ENCODE measurements at regions of chr7 and their contacts with region 1.

Region 1: DNA sequence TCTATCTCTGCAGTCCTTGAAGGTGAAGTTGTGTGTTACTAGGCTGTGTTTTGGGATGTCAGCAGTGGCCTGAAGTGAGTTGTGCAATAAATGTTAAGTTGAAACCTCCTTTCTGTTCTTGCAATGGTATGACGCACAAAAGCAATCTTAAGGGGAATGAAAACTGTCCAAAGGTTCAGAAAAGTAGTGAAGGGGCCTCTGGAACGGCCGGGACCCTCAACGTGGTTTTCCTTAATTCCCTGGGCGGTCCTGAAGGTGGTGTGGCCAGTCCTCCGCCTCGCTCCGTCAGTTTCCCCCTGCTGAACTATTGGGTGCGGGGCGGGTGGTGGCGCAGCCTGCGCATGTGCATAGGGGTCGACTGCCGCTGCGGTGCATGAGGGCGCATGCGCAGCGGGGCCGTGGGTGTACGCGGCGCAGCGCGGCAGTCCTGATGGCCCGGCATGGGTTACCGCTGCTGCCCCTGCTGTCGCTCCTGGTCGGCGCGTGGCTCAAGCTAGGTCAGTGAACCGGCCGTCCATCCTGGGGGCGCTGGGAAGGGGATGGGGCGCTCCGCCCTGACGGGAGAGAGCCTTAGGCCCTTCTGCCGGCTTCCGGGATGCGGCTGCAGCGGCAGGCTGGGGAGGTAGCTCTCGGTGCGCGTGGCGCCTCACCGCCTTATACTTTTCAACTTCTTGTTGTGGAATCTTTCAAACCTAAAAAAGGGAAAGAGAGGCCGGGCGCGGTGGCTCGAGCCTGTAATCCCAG is at the start of gene SUMF2:
- DNase-seq: peak; percentile 91
- ATAC-seq: peak; percentile 95
- H3K4me3 Mint-ChIP-seq: peak within 1 kb of the TSS; percentile 89
- H3K27ac Mint-ChIP-seq: peak within 1 kb of the TSS; percentile 92
- H3K4me1 Mint-ChIP-seq: peaks cover 45% of the 10 kb centered on the region
- H3K27me3 Mint-ChIP-seq: no peaks in the 10 kb centered on the region
- total RNA-seq, gene SUMF2: 115 to 145 TPM

Region 2: GRCh38 chr7:55964261-55965099 is 99.6 kb before region 1 on chr7 and contains the start of gene NIPSNAP2:
- CTCF ChIA-PET with region 1: interaction called, 15 read pairs
- DNase-seq: peak; percentile 59
- ATAC-seq: peak; percentile 88
- H3K4me3 Mint-ChIP-seq: peak within 1 kb of the TSS; percentile 75
- H3K27ac Mint-ChIP-seq: peak within 1 kb of the TSS; percentile 80
- H3K4me1 Mint-ChIP-seq: peaks cover 31% of the 10 kb centered on the region
- H3K27me3 Mint-ChIP-seq: no peaks in the 10 kb centered on the region
- total RNA-seq, gene NIPSNAP2: 28.6 to 29.0 TPM

Region 3: DNA sequence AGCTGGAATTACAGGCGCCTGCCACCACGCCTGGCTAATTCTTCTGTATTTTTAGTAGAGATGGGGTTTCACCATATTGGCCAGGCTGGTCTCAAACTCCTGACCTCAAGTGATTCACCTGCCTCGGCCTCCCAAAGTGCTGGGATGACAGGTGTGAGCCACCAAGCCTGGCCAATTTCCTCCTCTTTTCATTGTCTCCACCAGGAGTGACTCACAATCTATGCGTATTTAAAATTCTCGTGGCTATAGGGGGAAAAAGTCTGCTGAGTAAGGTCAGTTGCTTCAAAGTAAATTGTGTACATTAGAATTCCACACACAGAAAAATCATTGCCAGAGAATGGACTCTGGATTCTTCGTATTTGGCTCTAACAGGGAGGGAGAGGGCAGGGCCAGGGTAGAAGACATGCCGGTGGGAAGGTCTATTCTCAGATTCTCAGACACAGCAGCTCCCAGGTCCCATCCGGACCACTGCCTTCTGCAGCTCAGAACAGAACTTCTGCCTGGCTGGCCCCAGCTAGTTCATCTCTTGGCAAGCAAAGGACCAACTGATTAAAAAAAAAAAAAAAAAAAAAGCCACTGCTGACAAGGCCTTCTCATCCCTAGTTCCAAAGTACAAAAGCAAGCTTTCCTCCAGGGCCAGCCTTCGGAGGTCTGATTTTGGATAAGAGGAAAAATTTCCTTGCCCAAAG is 35.0 kb before region 1 on chr7:
- CTCF ChIA-PET with region 1: no interaction called
- DNase-seq: no peak
- ATAC-seq: no peak
- H3K4me3 Mint-ChIP-seq: no peak overlapping the region
- H3K27ac Mint-ChIP-seq: no peak overlapping the region
- H3K4me1 Mint-ChIP-seq: peaks cover 9% of the 10 kb centered on the region
- H3K27me3 Mint-ChIP-seq: no peaks in the 10 kb centered on the region

Region 4: DNA sequence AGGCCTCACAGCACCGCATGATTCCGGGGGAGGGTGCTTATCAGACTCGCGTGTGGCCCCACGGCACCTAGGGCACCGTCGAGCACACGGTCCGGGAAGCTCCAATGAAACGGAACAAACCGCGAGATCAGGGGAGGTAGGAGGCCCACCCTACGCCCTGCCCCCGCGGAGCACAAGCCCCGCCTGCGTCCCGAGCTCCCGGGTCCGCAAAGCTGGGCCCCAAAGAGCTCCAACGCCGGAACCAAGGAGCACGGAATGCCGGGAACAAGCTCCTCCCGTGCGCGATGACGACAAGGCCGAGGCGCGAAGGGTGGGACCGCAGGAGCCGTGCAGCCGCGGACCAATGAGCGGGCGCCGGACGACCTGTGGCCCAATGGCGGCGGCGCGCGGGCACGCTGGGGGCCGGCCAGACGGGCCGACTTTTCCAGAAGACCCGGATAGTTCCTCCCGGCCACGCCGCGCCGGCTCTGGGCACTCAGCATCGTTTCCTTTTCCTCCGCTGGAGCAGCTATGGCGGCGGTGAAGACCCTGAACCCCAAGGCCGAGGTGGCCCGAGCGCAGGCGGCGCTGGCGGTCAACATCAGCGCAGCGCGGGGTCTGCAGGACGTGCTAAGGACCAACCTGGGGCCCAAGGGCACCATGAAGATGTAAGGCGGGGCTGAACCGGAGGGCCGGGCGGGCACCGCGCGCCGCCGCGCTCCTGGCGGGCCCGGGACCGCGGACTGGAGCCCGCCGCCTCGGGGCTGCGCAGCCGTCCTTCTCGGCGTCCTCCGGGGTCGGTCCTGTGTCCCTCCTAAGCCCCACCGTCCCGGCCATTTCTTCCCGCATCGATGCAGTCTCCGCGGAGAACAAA is 12.5 kb before region 1 on chr7 and contains the starts of genes CCT6A and PSPH:
- CTCF ChIA-PET with region 1: interaction called, 14 read pairs
- DNase-seq: peak; percentile 93
- ATAC-seq: peak; percentile 96
- H3K4me3 Mint-ChIP-seq: peak within 1 kb of the TSS; percentile 87
- H3K27ac Mint-ChIP-seq: peak within 1 kb of the TSS; percentile 87
- H3K4me1 Mint-ChIP-seq: peaks cover 50% of the 10 kb centered on the region
- H3K27me3 Mint-ChIP-seq: no peaks in the 10 kb centered on the region
- total RNA-seq, gene CCT6A: 120 to 181 TPM
- total RNA-seq, gene PSPH: 12.4 to 22.2 TPM

Region 5: DNA sequence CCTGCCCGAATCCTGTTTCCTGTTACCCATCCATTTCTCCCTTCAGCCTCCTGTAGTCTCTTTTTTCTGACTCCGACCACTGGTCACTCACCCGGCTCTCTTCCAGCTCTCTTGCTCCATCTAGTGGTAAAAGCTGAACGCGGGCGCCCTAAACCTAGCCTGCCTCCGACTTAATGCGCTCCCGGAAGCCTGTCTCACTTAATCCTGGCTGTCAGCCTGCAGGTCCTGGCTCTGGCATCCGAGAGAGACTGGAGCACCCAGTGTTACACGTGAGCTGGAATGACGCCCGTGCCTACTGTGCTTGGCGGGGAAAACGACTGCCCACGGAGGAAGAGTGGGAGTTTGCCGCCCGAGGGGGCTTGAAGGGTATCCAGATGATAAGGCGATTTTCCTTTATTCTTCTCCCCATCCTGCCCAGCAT is 10.3 kb after region 1 on chr7:
- CTCF ChIA-PET with region 1: interaction called, 20 read pairs
- DNase-seq: peak; percentile 75
- ATAC-seq: peak; percentile 83
- H3K4me3 Mint-ChIP-seq: no peak overlapping the region
- H3K27ac Mint-ChIP-seq: peak overlapping the region; percentile 33
- H3K4me1 Mint-ChIP-seq: peaks cover 3% of the 10 kb centered on the region
- H3K27me3 Mint-ChIP-seq: no peaks in the 10 kb centered on the region

Region 6: DNA sequence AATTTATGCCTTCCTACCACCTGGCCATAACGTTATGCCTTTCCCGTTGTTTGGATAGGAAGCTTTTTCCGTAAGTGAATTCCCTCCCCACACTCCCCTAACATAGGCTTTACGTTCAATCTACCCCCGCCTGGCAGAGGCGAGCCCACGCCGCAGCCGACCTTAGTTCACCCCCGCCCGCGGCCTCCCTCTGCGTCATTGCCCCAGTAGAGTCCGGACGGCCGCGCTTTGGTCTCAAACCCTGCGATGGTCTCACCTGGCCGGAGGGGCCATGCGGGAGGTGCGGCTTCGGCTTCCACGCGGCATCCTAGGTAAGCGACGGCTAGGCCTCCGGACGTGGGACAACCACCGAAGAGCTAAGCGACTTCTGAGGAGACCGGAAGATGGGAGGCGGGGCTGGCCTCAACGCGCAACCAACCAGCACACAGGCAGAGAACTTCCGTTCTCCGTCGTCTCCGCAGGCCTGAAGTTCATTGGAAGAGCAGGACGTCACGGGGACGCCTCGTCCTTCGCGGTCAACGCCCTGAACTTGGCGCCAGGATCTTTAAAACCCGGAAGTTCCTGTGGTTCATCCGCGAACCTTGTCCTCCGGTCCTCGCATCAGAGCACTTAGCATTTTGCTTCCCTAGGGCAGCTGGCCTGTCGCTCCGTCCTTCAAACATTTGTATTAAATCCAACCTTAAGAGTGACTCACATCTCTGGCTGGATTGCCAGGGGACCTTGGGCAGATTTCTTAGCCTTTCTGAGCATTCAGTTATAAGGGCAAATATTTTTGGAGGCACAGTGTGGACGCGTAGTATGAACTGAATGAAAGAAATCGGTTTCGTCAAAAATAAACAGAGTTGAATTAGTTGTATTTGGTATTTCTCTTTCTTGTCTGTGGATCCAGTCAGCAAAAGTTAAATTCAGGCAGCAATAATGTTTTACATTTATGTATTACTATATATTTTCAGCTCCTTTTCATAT is 42.3 kb after region 1 on chr7 and contains the start of gene CHCHD2:
- CTCF ChIA-PET with region 1: interaction called, 11 read pairs
- DNase-seq: peak; percentile 97
- ATAC-seq: peak; percentile 99
- H3K4me3 Mint-ChIP-seq: peak within 1 kb of the TSS; percentile 97
- H3K27ac Mint-ChIP-seq: peak within 1 kb of the TSS; percentile 99
- H3K4me1 Mint-ChIP-seq: peaks cover 33% of the 10 kb centered on the region
- H3K27me3 Mint-ChIP-seq: no peaks in the 10 kb centered on the region
- total RNA-seq, gene CHCHD2: 454 to 534 TPM